HEK293 (cell line): ENCODE measurements at regions of chr3 and their contacts with region 1.

Region 1: DNA sequence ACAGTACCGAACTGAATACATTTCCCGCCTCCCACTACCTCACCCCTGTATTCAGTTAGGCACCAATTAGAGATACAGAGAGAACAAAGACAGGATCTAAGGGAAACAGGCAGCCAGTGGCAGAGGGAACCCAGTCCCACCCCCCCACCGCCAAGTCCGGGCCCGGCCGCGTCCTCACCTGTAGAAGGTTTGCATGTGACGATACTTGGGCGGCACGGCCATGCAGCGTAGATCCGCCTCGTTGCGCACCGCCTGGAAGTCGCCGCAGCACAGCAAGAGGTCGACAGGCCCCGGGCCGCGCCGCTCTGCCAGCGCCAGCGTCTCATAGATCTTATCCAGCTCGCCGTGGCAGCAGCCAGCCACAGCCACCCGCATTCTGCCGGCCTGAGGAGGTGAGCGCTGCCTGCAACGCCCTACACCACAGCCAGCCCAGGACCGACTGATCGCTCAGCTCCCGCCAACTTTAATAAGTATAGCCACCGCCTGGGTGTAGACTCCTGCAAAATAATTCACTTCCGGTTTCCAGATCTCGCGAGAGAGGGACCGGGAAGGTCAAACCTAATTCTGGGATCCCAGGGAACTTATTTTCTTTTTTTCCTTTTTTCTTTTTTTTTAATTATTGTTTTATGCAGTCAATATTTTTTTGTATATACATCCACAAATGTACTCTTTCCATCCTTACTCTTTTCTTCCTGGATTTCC is at the start of gene DBR1:
- H3K4me3 ChIP-seq: peak within 1 kb of the TSS; percentile 94
- H3K27ac ChIP-seq: peak within 1 kb of the TSS; percentile 76; the same call in 1 of the 2 replicates
- H3K4me1 ChIP-seq: no peaks in the 10 kb centered on the region
- CTCF ChIP-seq: peak; percentile 12; the same call in 1 of the 2 replicates

Region 2: DNA sequence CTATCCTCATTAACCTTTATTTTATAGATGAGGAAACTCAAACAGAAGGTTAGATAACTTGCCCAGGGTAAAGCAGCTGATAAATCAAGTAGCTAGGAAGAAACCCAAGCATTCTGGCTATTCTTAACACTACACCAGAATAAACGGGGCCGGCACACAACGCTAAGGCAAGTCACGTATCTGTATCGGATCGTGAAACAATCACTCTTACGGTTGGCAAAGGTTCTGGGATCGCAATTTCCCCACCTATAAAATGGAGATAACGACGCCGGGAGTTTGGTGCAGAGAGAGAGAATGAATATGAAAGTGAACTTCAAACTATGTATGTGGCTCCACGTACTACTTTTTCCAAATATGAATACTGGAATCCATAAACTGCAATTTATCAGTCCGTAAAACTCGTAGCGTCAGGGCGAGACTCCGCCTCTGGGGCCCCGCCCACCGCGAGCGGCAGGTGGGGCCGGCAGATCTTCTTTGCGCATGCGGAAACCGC is 12.3 kb after region 1 on chr3:
- CTCF ChIA-PET with region 1: interaction called, 3 read pairs
- POLR2A ChIA-PET with region 1: interaction called, 22 read pairs
- H3K4me3 ChIP-seq: peak overlapping the region; percentile 99
- H3K27ac ChIP-seq: peak overlapping the region; percentile 88
- H3K4me1 ChIP-seq: no peaks in the 10 kb centered on the region; the same call in 1 of the 2 replicates
- CTCF ChIP-seq: no peak

Region 3: DNA sequence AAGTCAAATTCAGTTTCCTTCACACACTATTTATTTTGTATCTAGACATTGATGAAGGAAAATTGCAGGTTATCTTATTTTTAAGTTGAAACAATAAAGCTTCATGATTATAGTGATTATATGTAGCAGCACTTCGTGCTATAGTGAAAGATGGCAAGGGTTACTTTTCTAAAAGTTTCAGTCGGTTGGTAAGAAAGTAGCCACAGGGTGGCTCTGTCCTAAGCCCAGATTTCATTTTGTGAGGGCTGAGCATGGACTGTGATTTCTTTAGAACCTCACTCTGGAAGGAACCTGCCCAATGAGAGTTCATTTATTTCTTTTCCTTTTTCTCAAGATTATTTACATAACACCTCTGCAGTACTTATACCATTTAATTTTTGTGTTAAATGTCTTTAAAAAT is 88.5 kb after region 1 on chr3:
- CTCF ChIA-PET with region 1: no interaction called
- POLR2A ChIA-PET with region 1: no interaction called
- H3K4me3 ChIP-seq: no peak overlapping the region
- H3K27ac ChIP-seq: no peak overlapping the region
- H3K4me1 ChIP-seq: no peaks in the 10 kb centered on the region
- CTCF ChIP-seq: no peak

Region 4: GRCh38 chr3:138960417-138960852 is 785.9 kb after region 1 on chr3:
- CTCF ChIA-PET with region 1: no interaction called
- POLR2A ChIA-PET with region 1: no interaction called
- H3K4me3 ChIP-seq: no peak overlapping the region
- H3K27ac ChIP-seq: no peak overlapping the region
- H3K4me1 ChIP-seq: no peaks in the 10 kb centered on the region
- CTCF ChIP-seq: no peak